ENCODE measurements at regions of chr1 and their contacts with region 1.

Region 1: DNA sequence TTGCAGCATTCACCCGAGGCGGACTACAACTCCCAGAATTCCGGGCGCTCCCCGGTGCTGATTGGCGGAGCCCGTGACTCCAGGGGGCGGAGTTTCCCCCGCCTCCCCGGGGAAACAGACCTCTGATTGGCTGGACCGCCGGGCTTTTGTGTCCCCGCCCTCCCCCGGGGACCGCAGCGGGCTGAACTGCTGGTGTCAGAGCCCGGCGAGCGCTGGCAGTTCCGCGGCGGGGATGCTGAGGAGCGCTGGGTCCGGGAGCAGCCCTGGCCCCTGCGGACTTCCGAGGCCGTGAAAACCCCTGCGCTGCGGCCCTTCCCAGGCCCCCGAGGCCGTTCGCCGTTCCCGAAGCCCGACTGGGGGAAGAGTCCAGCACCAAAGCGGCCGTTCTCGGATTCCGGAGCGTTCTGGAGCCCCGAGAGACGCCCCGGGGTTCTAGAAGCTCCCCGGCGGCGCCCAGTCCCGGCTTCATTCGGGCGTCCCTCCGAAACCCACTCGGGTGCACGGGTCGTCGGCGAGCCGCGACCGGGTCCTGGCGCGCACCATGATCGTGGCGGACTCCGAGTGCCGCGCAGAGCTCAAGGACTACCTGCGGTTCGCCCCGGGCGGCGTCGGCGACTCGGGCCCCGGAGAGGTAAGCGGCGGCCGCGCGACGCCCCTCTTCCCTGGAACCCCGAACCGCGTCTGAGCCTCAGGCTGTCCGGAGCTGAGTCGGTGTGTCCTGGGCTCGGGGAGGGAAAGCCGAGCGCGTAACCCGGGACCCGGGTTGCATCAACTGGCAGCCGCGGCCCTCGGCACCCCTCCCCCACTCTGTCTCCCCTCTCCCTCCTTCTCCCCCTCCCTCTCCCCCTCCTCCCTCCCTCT is at the start of gene SESN2:
- DNase-seq: peak; percentile 99
- ATAC-seq: peak; percentile 88
- H3K4me3 Mint-ChIP-seq: peak within 1 kb of the TSS; percentile 79
- H3K27ac Mint-ChIP-seq: peak within 1 kb of the TSS; percentile 98
- H3K4me1 Mint-ChIP-seq: peaks cover 32% of the 10 kb centered on the region
- H3K27me3 Mint-ChIP-seq: no peaks in the 10 kb centered on the region
- total RNA-seq, gene SESN2: 14.6 to 16.0 TPM

Region 2: GRCh38 chr1:28235755-28236655 is 23.5 kb before region 1 on chr1 and contains the start of gene ATP5IF1:
- POLR2A ChIA-PET with region 1: interaction called, 14 read pairs
- DNase-seq: peak; percentile 88
- ATAC-seq: peak; percentile 98
- H3K4me3 Mint-ChIP-seq: no peak within 1 kb of the TSS
- H3K27ac Mint-ChIP-seq: no peak within 1 kb of the TSS
- H3K4me1 Mint-ChIP-seq: peaks cover 7% of the 10 kb centered on the region
- H3K27me3 Mint-ChIP-seq: no peaks in the 10 kb centered on the region
- total RNA-seq, gene ATP5IF1: 209 to 222 TPM